A673 (cell line): ENCODE measurements at regions of chr5 and their contacts with region 1.

Region 1: DNA sequence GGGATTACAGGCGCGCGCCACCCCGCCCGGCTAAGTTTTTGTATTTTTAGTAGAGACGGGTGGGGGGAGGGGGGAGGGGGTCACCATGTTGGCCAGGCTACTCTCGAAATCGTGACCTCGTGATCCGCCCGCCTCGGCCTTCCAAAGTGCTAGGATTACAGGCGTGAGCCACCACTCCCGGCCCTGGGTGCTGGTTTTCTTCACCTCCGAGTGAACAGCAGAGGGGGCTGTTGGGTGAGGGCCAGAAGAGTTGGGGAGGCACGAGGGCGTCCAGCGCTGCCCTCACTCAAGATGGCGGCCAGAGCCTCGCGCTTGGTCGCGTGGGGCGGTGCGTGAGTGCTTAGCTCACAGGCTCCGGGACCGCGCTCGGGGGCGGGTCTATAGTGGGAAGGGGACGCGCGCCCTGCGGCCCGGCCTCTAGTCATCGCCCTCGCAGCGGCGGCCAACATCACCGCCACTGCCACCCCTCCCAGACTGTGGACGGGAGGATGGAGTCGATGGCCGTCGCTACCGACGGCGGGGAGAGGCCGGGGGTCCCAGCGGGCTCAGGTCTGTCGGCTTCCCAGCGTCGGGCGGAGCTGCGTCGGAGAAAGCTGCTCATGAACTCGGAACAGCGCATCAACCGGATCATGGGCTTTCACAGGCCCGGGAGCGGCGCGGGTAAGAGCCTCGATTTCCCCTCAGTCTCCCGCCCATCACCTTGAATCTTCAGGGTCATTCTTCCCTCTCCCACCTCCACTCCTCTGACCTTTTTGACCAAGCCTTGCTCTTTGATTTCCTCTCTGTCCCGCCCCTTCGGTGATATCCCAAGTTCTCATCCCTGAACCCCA is at the start of gene CAMLG:
- DNase-seq: peak; percentile 99
- H3K4me3 ChIP-seq: peak within 1 kb of the TSS; percentile 85
- H3K27ac ChIP-seq: peak within 1 kb of the TSS; percentile 91
- H3K4me1 ChIP-seq: peaks cover 6% of the 10 kb centered on the region
- H3K27me3 ChIP-seq: no peaks in the 10 kb centered on the region
- CTCF ChIP-seq: peak; percentile 77
- total RNA-seq, gene CAMLG: 37.6 and 38.8 TPM in 2 replicates

Region 2: DNA sequence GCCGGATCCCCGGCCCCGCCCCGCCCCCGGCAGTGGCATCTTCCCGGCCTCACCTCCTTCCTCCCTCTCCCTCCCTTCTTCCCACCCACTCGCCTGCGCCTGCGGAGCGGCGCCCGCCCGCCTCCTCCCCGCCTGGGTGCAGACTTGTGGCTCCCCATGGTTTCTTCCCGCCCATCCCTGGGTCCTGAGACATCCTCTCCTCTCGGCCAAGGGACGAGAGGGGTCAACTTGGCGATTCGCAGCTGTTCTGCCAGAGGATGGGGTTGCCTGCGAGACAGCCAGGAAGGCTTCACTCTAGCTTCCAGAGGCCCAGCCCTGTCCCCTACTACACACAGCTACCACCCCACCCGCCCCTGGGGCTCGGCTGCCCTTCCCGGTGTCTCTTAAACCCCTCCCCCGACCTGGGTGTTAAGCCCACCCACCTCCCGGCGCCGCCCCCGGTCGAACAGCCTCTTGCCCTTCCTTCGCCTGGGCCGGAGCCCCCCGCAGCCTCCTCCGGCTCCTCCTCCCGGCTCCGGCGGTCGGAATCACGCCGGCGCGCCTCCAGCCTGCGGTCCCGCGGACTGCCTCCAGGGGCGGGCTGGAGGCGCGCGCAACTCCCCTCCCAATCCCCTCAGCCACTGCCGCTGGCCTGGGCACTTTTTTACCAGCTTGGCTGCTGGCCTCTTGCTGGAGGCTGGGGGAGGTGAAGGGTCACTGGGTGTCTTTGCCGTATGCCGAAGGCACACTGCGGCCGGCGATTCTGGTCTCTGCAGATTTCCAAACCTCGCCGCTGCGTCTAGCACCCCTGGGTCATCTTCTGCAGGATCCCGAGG is 211.0 kb before region 1 on chr5:
- CTCF ChIA-PET with region 1: no interaction called
- POLR2A ChIA-PET with region 1: no interaction called
- intact Hi-C with region 1: loop called (anchors 5 kb)
- DNase-seq: peak; percentile 92
- H3K4me3 ChIP-seq: peak overlapping the region; percentile 84
- H3K27ac ChIP-seq: peak overlapping the region; percentile 68
- H3K4me1 ChIP-seq: peaks cover 13% of the 10 kb centered on the region
- H3K27me3 ChIP-seq: no peaks in the 10 kb centered on the region
- CTCF ChIP-seq: peak; percentile 78

Region 3: DNA sequence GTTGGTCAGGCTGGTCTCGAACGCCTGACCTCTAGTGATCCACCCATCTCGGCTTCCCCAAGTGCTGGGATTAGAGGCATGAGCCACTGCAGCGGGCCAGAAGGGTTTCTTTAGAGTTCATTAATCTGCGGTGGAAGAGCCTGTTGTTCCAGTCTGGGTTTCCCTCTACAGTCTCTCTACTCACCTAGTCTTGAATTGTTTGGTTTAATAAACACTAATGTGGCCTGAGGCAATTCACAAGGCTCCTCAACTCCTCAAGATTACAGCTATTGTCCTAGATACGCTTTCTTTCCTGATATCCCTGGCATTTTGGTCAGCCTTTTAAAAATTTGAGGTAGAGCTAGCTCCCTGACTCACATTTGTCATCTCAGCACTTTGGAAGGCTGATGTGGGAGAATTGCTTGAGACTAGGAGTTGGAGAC is 101.2 kb before region 1 on chr5:
- CTCF ChIA-PET with region 1: no interaction called
- POLR2A ChIA-PET with region 1: interaction called, 10 read pairs
- intact Hi-C with region 1: no loop called
- DNase-seq: no peak
- H3K4me3 ChIP-seq: no peak overlapping the region
- H3K27ac ChIP-seq: no peak overlapping the region
- H3K4me1 ChIP-seq: no peaks in the 10 kb centered on the region
- H3K27me3 ChIP-seq: no peaks in the 10 kb centered on the region
- CTCF ChIP-seq: no peak

Region 4: GRCh38 chr5:134851307-134851923 is 113.1 kb after region 1 on chr5:
- CTCF ChIA-PET with region 1: no interaction called
- POLR2A ChIA-PET with region 1: no interaction called
- intact Hi-C with region 1: loop called (anchors 2 kb)
- DNase-seq: peak; percentile 70
- H3K4me3 ChIP-seq: no peak overlapping the region
- H3K27ac ChIP-seq: no peak overlapping the region
- H3K4me1 ChIP-seq: peaks cover 17% of the 10 kb centered on the region
- H3K27me3 ChIP-seq: no peaks in the 10 kb centered on the region
- CTCF ChIP-seq: peak; percentile 66

Region 5: DNA sequence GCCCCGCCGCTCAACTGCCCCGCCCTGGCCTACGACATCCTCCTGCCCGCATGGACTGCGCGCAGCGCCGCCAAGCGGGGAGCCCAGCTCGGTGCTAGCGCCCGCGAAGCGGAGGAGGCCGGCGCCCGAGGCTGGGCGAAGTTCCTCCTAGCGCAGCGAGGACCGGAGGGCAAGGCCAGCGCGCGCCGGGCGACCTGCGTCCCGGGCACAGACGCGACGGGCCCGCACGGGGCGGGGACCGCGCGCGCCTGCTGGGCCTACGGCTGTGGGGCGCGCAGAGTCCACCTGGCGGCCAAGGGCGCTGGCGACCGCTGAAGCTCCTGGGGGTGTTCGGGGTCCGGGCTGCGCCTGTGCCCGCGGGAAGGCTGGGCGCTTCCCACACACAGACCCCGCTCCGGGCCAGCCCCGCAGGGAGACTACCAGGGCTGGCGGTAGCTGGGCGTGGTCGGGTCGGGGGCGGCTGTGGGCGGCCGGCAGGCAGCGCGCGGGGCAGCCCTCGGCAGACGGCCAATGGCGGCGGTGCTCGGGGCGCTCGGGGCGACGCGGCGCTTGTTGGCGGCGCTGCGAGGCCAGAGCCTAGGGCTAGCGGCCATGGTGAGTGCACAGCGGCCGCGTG is 166.4 kb after region 1 on chr5 and contains the start of gene PCBD2:
- CTCF ChIA-PET with region 1: interaction called, 7 read pairs
- POLR2A ChIA-PET with region 1: no interaction called
- intact Hi-C with region 1: loop called (anchors 1 kb)
- DNase-seq: peak; percentile 96
- H3K4me3 ChIP-seq: peak within 1 kb of the TSS; percentile 75
- H3K27ac ChIP-seq: peak within 1 kb of the TSS; percentile 96
- H3K4me1 ChIP-seq: peaks cover 7% of the 10 kb centered on the region
- H3K27me3 ChIP-seq: no peaks in the 10 kb centered on the region
- CTCF ChIP-seq: peak; percentile 90
- total RNA-seq, gene PCBD2: 13.8 and 14.6 TPM in 2 replicates

Region 6: GRCh38 chr5:135191084-135191826 is 452.9 kb after region 1 on chr5:
- CTCF ChIA-PET with region 1: no interaction called
- POLR2A ChIA-PET with region 1: no interaction called
- intact Hi-C with region 1: loop called (anchors 5 kb)
- DNase-seq: peak; percentile 82
- H3K4me3 ChIP-seq: peak overlapping the region; percentile 43
- H3K27ac ChIP-seq: no peak overlapping the region
- H3K4me1 ChIP-seq: no peaks in the 10 kb centered on the region
- H3K27me3 ChIP-seq: peaks cover 57% of the 10 kb centered on the region
- CTCF ChIP-seq: peak; percentile 96